OCI-LY7 (cell line): ENCODE measurements at regions of chr2 and their contacts with region 1.

Region 1: GRCh38 chr2:153963256-153963655 is 91.5 kb downstream of the GALNT13 start:
- DNase-seq: no peak
- H3K4me3 ChIP-seq: no peak overlapping the region
- H3K27ac ChIP-seq: no peak overlapping the region
- H3K4me1 ChIP-seq: no peaks in the 10 kb centered on the region
- CTCF ChIP-seq: no peak

Region 2: GRCh38 chr2:153935511-153935910 is 27.7 kb before region 1 on chr2:
- CTCF ChIA-PET with region 1: no interaction called
- POLR2A ChIA-PET with region 1: interaction called, 10 read pairs
- intact Hi-C with region 1: no loop called
- DNase-seq: no peak
- H3K4me3 ChIP-seq: no peak overlapping the region
- H3K27ac ChIP-seq: no peak overlapping the region
- H3K4me1 ChIP-seq: no peaks in the 10 kb centered on the region
- CTCF ChIP-seq: no peak